ENCODE measurements at regions of chr2 and their contacts with region 1.

Region 1: DNA sequence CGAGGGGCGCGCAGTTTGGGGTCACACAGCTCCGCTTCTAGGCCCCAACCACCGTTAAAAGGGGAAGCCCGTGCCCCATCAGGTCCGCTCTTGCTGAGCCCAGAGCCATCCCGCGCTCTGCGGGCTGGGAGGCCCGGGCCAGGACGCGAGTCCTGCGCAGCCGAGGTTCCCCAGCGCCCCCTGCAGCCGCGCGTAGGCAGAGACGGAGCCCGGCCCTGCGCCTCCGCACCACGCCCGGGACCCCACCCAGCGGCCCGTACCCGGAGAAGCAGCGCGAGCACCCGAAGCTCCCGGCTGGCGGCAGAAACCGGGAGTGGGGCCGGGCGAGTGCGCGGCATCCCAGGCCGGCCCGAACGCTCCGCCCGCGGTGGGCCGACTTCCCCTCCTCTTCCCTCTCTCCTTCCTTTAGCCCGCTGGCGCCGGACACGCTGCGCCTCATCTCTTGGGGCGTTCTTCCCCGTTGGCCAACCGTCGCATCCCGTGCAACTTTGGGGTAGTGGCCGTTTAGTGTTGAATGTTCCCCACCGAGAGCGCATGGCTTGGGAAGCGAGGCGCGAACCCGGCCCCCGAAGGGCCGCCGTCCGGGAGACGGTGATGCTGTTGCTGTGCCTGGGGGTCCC is at the start of gene ITGA4:
- DNase-seq: peak; percentile 72 to 81 (median 80)
- H3K4me3 ChIP-seq: peak within 1 kb of the TSS; percentile 54 to 99 (median 96)
- H3K4me3 Mint-ChIP-seq: peak within 1 kb of the TSS; percentile 96 to 99
- H3K27ac ChIP-seq: peak within 1 kb of the TSS; percentile 80 to 91
- H3K27ac Mint-ChIP-seq: peak within 1 kb of the TSS; percentile 89 to 96 (median 92)
- H3K4me1 ChIP-seq: peaks cover 32 to 57% of the 10 kb centered on the region in 2 donors
- H3K4me1 Mint-ChIP-seq: peaks cover 54% of the 10 kb centered on the region
- H3K27me3 ChIP-seq: no peaks in the 10 kb centered on the region
- H3K27me3 Mint-ChIP-seq: no peaks in the 10 kb centered on the region
- CTCF ChIP-seq: peak; percentile 90
- polyA plus RNA-seq, gene ITGA4: 66.1 to 97.3 (median 84.1) TPM

Region 2: GRCh38 chr2:181077128-181077709 is 380.0 kb before region 1 on chr2:
- intact Hi-C with region 1: loop called (anchors 5 to 10 kb)
- DNase-seq: peak; percentile 28 to 47 (median 44)
- H3K4me3 ChIP-seq: no peak overlapping the region
- H3K4me3 Mint-ChIP-seq: no peak overlapping the region
- H3K27ac ChIP-seq: no peak overlapping the region
- H3K27ac Mint-ChIP-seq: no peak overlapping the region
- H3K4me1 ChIP-seq: peaks cover 8 to 17% of the 10 kb centered on the region in 2 donors
- H3K4me1 Mint-ChIP-seq: peaks cover 11% of the 10 kb centered on the region
- H3K27me3 ChIP-seq: no peaks in the 10 kb centered on the region
- H3K27me3 Mint-ChIP-seq: no peaks in the 10 kb centered on the region
- CTCF ChIP-seq: peak; percentile 79

Region 3: GRCh38 chr2:181104512-181105115 is 352.6 kb before region 1 on chr2:
- intact Hi-C with region 1: loop called (anchors 5 to 10 kb)
- DNase-seq: peak; percentile 16 to 49 (median 38)
- H3K4me3 ChIP-seq: no peak overlapping the region
- H3K4me3 Mint-ChIP-seq: peak overlapping the region in 1 of 2 donors; percentile 68
- H3K27ac ChIP-seq: no peak overlapping the region
- H3K27ac Mint-ChIP-seq: no peak overlapping the region
- H3K4me1 ChIP-seq: peaks cover 0 to 7% of the 10 kb centered on the region in 2 donors
- H3K4me1 Mint-ChIP-seq: peaks cover 10% of the 10 kb centered on the region
- H3K27me3 ChIP-seq: no peaks in the 10 kb centered on the region
- H3K27me3 Mint-ChIP-seq: peaks cover 0 to 4% (median 0%) of the 10 kb centered on the region in 3 donors
- CTCF ChIP-seq: peak; percentile 81

Region 4: DNA sequence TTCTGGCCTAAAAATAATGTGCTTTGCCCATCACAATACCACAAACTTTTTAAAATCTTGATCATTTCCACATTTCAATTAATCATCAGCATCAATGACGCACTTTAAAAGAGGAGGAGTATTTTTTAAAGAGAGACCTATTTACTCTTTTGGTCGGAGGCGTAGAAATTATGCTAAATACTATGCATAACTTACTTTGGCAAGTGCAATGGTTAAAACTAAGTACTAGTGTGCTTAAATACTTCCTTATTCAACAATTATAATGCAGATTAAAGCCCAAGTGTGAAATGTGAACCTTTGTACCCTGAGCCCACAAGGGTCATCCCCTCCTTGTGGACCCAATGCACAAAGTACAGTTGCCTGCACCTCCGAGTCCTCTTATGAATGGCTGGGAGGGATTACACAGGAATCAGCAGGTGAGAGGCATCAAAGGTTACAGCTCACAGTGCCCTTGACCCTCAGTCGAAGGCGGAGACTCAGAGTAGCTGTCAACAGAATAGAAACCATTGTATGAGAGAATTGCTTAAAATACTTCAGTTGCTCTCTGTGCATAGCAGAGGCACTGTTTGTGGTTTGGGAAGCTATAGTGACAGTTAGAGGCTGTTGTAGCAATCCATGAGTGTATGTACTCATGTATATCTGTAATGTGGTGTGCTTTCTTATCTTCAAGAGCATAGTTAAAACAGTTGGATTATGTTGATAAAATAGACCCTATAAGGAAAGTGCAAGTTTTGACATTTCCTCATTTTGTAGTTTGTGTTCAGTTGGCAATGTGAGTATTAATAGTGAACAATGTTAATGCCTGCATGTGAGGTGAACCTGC is 151.7 kb before region 1 on chr2:
- intact Hi-C with region 1: loop called (anchors 5 to 10 kb)
- DNase-seq: peak; percentile 24 to 66 (median 32)
- H3K4me3 ChIP-seq: peak overlapping the region in 2 of 3 experiments; percentile 19 to 33
- H3K4me3 Mint-ChIP-seq: peak overlapping the region; percentile 47 to 51
- H3K27ac ChIP-seq: peak overlapping the region; percentile 62 to 90
- H3K27ac Mint-ChIP-seq: peak overlapping the region; percentile 89 to 95 (median 94)
- H3K4me1 ChIP-seq: peaks cover 54 to 71% of the 10 kb centered on the region in 2 donors
- H3K4me1 Mint-ChIP-seq: peaks cover 71% of the 10 kb centered on the region
- H3K27me3 ChIP-seq: no peaks in the 10 kb centered on the region
- H3K27me3 Mint-ChIP-seq: no peaks in the 10 kb centered on the region
- CTCF ChIP-seq: no peak

Region 5: DNA sequence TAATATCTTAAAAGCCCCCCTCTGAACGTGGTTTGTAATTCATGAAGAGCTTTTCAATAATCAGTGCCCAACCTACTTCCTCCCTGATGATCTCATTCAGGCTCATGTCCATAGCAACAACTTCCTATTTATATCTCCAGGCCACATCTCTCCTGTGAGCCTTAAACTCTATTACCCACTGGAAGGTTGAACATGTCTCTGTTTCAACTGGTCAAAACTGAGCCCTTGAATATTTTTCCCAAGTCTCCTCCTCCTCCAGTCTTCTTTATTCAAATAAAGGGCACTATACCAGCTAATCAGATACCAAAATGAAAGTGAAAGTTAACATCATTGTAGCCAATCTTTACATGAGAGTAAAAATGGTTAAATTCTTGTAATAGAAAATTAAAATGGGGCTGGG is 63.8 kb before region 1 on chr2:
- intact Hi-C with region 1: no loop called
- DNase-seq: peak; percentile 48 to 77 (median 76)
- H3K4me3 ChIP-seq: peak overlapping the region in 1 of 3 experiments; percentile 29
- H3K4me3 Mint-ChIP-seq: peak overlapping the region; percentile 50 to 60
- H3K27ac ChIP-seq: peak overlapping the region; percentile 26 to 79
- H3K27ac Mint-ChIP-seq: peak overlapping the region; percentile 83 to 95 (median 89)
- H3K4me1 ChIP-seq: peaks cover 25 to 41% of the 10 kb centered on the region in 2 donors
- H3K4me1 Mint-ChIP-seq: peaks cover 34% of the 10 kb centered on the region
- H3K27me3 ChIP-seq: no peaks in the 10 kb centered on the region
- H3K27me3 Mint-ChIP-seq: no peaks in the 10 kb centered on the region
- CTCF ChIP-seq: no peak

Region 6: GRCh38 chr2:181407171-181407570 is 50.1 kb before region 1 on chr2:
- intact Hi-C with region 1: no loop called
- DNase-seq: peak; percentile 72 to 74 (median 73)
- H3K4me3 ChIP-seq: peak overlapping the region in 1 of 3 experiments; percentile 20
- H3K4me3 Mint-ChIP-seq: peak overlapping the region in 1 of 2 donors; percentile 48
- H3K27ac ChIP-seq: peak overlapping the region in 1 of 2 donors; percentile 72
- H3K27ac Mint-ChIP-seq: peak overlapping the region; percentile 74 to 91 (median 87)
- H3K4me1 ChIP-seq: peaks cover 34 to 48% of the 10 kb centered on the region in 2 donors
- H3K4me1 Mint-ChIP-seq: peaks cover 39% of the 10 kb centered on the region
- H3K27me3 ChIP-seq: no peaks in the 10 kb centered on the region
- H3K27me3 Mint-ChIP-seq: no peaks in the 10 kb centered on the region
- CTCF ChIP-seq: no peak

Region 7: GRCh38 chr2:181419129-181419855 is 37.9 kb before region 1 on chr2:
- intact Hi-C with region 1: loop called in 1 of 2 experiments (anchors 5 kb)
- DNase-seq: peak; percentile 39 to 53 (median 44)
- H3K4me3 ChIP-seq: no peak overlapping the region
- H3K4me3 Mint-ChIP-seq: peak overlapping the region in 1 of 2 donors; percentile 69
- H3K27ac ChIP-seq: peak overlapping the region in 1 of 2 donors; percentile 74
- H3K27ac Mint-ChIP-seq: peak overlapping the region; percentile 67 to 96 (median 89)
- H3K4me1 ChIP-seq: peaks cover 17 to 23% of the 10 kb centered on the region in 2 donors
- H3K4me1 Mint-ChIP-seq: peaks cover 22% of the 10 kb centered on the region
- H3K27me3 ChIP-seq: no peaks in the 10 kb centered on the region
- H3K27me3 Mint-ChIP-seq: no peaks in the 10 kb centered on the region
- CTCF ChIP-seq: no peak

Measured in CD14-positive monocyte (primary cell).